CD8-positive, alpha-beta T cell (primary cell): ENCODE measurements at regions of chr19 and their contacts with region 1.

Region 1: GRCh38 chr19:21141787-21142464 is at the start of gene ZNF431:
- DNase-seq: peak; percentile 79 to 96 (median 88)
- ATAC-seq: peak; percentile 99
- H3K4me3 ChIP-seq: peak within 1 kb of the TSS; percentile 68 to 90
- H3K4me3 Mint-ChIP-seq: peak within 1 kb of the TSS; percentile 97
- H3K27ac ChIP-seq: peak within 1 kb of the TSS; percentile 65 to 85
- H3K27ac Mint-ChIP-seq: peak within 1 kb of the TSS; percentile 97
- H3K4me1 ChIP-seq: peaks cover 9% of the 10 kb centered on the region
- H3K4me1 Mint-ChIP-seq: peaks cover 46% of the 10 kb centered on the region
- H3K27me3 ChIP-seq: no peaks in the 10 kb centered on the region
- H3K27me3 Mint-ChIP-seq: no peaks in the 10 kb centered on the region
- CTCF ChIP-seq: no peak
- total RNA-seq, gene ZNF431: 31.2 to 32.4 TPM

Region 2: DNA sequence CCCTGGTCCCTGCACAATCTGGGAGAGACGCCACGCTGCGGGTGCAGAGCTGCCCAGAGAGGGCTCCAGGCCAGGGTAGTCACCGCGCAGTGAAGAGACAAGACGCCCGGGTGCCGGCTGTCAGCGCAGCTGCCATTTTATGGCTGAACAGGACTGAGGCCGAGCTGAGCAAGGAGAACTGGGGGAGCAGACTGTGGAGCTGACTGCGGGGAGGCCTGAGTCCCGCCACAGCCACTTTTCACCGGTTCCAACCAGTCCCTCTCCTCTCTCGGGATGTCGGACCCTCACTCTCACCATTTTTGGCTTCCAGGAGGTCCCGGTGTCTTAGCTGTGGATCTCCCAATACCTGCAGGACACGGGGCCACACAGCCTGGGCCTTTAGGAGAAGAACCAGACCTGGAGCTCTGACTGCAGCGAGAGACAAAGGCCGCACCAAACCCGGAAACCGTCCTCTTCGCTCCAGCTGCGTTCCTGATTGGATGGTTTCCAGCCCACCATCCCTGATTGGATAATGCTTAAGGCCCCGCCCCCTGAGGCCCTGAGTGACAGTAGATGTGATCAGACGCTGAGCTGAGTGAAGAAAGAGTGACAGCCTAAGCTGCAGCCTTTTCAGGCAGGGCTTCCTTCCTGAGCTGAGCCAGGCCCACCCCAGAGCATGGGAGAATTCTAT is 480.6 kb before region 1 on chr19 and contains the start of gene ZNF626:
- CTCF ChIA-PET with region 1: no interaction called
- POLR2A ChIA-PET with region 1: interaction called, 4 read pairs
- intact Hi-C with region 1: loop called in 1 of 2 experiments (anchors 5 kb)
- DNase-seq: peak; percentile 78 to 97 (median 90)
- ATAC-seq: peak; percentile 98
- H3K4me3 ChIP-seq: peak within 1 kb of the TSS; percentile 67 to 91
- H3K4me3 Mint-ChIP-seq: peak within 1 kb of the TSS; percentile 94
- H3K27ac ChIP-seq: peak within 1 kb of the TSS; percentile 73 to 91
- H3K27ac Mint-ChIP-seq: peak within 1 kb of the TSS; percentile 97
- H3K4me1 ChIP-seq: peaks cover 12% of the 10 kb centered on the region
- H3K4me1 Mint-ChIP-seq: peaks cover 43% of the 10 kb centered on the region
- H3K27me3 ChIP-seq: no peaks in the 10 kb centered on the region
- H3K27me3 Mint-ChIP-seq: no peaks in the 10 kb centered on the region
- CTCF ChIP-seq: no peak
- total RNA-seq, gene ZNF626: 5.7 to 6.6 TPM

Region 3: GRCh38 chr19:20999731-21000352 is 142.1 kb before region 1 on chr19:
- CTCF ChIA-PET with region 1: no interaction called
- POLR2A ChIA-PET with region 1: no interaction called
- intact Hi-C with region 1: loop called in 1 of 2 experiments (anchors 5 kb)
- DNase-seq: peak; percentile 67 to 94 (median 82)
- ATAC-seq: peak; percentile 100
- H3K4me3 ChIP-seq: peak overlapping the region; percentile 48 to 69
- H3K4me3 Mint-ChIP-seq: peak overlapping the region; percentile 85
- H3K27ac ChIP-seq: no peak overlapping the region
- H3K27ac Mint-ChIP-seq: no peak overlapping the region
- H3K4me1 ChIP-seq: no peaks in the 10 kb centered on the region
- H3K4me1 Mint-ChIP-seq: peaks cover 3% of the 10 kb centered on the region
- H3K27me3 ChIP-seq: no peaks in the 10 kb centered on the region
- H3K27me3 Mint-ChIP-seq: no peaks in the 10 kb centered on the region
- CTCF ChIP-seq: no peak

Region 4: DNA sequence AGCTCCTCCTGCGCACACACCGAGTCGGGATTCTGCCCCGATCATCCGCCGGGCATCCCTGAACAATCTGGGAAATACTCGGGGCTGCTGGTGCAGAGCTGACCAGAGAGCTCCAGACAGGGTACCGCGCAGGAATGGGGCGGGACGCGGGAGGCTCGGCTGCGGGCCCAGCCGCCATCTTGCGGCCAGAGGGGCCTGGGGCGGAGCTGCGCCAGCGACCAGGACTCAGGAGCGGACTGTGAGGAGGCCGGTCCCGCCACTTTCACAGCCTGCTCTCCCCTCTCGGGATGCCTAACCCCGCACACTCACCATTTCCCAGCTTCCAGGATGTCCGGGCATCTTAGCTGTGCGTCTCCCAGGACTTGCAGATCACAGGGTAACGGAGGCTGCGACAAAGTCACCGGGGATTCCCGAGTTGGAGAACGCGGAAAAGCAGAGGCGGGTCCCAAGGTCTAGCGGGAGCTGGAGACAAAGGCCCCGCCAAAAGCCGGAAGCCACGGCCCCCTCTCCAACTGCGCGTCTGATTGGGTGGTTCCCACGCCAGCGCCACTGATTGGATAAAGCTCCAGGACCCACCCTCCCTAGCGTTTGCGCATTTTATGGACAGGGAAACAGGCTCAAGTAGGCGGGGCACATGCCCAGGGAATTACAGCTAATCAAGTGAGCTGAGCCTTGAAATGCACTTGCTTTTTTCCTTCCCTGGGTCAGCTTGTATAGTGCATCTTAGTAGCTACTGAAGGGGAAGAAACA is 709.8 kb after region 1 on chr19:
- CTCF ChIA-PET with region 1: no interaction called
- POLR2A ChIA-PET with region 1: no interaction called
- intact Hi-C with region 1: loop called in 1 of 2 experiments (anchors 2 kb)
- DNase-seq: peak; percentile 72 to 94 (median 90)
- ATAC-seq: peak; percentile 99
- H3K4me3 ChIP-seq: peak overlapping the region; percentile 95
- H3K4me3 Mint-ChIP-seq: peak overlapping the region; percentile 93
- H3K27ac ChIP-seq: peak overlapping the region; percentile 68 to 80
- H3K27ac Mint-ChIP-seq: peak overlapping the region; percentile 91
- H3K4me1 ChIP-seq: peaks cover 11% of the 10 kb centered on the region
- H3K4me1 Mint-ChIP-seq: peaks cover 26% of the 10 kb centered on the region
- H3K27me3 ChIP-seq: no peaks in the 10 kb centered on the region
- H3K27me3 Mint-ChIP-seq: peaks cover 2% of the 10 kb centered on the region
- CTCF ChIP-seq: no peak